ENCODE measurements at regions of chr18 and their contacts with region 1.

Region 1: GRCh38 chr18:35282353-35282752 is 7.7 kb downstream of the ZSCAN30 start:
- DNase-seq: no peak
- ATAC-seq: no peak
- H3K4me3 ChIP-seq: no peak overlapping the region
- H3K27ac ChIP-seq: no peak overlapping the region
- H3K4me1 ChIP-seq: no peaks in the 10 kb centered on the region
- H3K27me3 ChIP-seq: no peaks in the 10 kb centered on the region

Region 2: GRCh38 chr18:35174093-35174731 is 108.1 kb before region 1 on chr18:
- intact Hi-C with region 1: no loop called
- DNase-seq: no peak
- ATAC-seq: no peak
- H3K4me3 ChIP-seq: no peak overlapping the region
- H3K27ac ChIP-seq: no peak overlapping the region
- H3K4me1 ChIP-seq: no peaks in the 10 kb centered on the region
- H3K27me3 ChIP-seq: no peaks in the 10 kb centered on the region

Region 3: GRCh38 chr18:35203067-35203466 is 79.3 kb before region 1 on chr18:
- intact Hi-C with region 1: no loop called
- DNase-seq: no peak
- ATAC-seq: no peak
- H3K4me3 ChIP-seq: no peak overlapping the region
- H3K27ac ChIP-seq: no peak overlapping the region
- H3K4me1 ChIP-seq: no peaks in the 10 kb centered on the region
- H3K27me3 ChIP-seq: no peaks in the 10 kb centered on the region

Region 4: DNA sequence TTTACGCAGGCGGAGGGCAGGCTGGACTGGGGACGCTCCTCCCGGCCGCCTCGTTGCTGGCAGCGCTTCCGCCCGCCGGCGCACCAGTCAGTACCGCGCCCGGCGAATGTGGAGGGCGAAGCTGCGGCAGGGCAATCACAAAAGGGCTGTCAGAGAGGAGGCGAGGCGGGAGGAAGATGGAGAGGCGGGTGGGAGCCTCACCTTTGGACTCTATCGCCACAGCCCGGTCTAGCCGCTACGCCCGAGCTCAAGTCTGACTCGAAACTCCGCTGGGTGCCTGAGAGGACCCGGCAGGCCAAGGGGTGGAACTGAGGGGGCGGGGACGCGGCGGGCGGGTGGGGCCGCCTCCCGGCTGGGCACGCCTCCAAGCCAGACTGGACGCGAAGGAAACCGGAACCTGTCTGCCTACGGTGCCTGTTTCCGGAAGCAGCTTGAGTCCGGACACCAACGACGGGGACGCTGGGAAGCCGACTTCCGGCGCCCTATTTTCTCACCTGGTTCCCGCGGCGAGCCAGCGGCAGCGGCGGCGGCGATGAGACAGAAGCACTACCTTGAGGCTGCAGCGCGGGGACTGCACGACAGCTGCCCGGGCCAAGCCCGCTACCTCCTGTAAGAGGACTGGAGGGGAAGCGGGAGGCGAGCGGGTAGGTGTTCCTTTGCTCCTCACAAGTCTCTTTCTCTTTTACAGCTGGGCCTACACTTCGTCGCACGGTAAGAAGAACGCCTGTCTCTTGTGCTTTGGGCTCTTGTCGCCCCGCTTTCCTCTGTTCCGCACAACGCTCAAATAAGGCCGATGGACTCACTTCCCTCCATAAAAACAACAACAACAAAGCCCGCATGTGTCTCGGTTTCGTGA is 690.1 kb after region 1 on chr18 and contains the start of gene RMP24:
- intact Hi-C with region 1: loop called in 1 of 2 experiments (anchors 5 kb)
- DNase-seq: peak; percentile 95 to 97
- ATAC-seq: peak; percentile 98
- H3K4me3 ChIP-seq: peak within 1 kb of the TSS; percentile 81 to 87
- H3K27ac ChIP-seq: peak within 1 kb of the TSS; percentile 59 to 96
- H3K4me1 ChIP-seq: peaks cover 0 to 6% of the 10 kb centered on the region in 2 donors
- H3K27me3 ChIP-seq: no peaks in the 10 kb centered on the region

Measured in aorta (tissue), 5 donors.